ENCODE measurements at regions of chr4 and their contacts with region 1.

Region 1: DNA sequence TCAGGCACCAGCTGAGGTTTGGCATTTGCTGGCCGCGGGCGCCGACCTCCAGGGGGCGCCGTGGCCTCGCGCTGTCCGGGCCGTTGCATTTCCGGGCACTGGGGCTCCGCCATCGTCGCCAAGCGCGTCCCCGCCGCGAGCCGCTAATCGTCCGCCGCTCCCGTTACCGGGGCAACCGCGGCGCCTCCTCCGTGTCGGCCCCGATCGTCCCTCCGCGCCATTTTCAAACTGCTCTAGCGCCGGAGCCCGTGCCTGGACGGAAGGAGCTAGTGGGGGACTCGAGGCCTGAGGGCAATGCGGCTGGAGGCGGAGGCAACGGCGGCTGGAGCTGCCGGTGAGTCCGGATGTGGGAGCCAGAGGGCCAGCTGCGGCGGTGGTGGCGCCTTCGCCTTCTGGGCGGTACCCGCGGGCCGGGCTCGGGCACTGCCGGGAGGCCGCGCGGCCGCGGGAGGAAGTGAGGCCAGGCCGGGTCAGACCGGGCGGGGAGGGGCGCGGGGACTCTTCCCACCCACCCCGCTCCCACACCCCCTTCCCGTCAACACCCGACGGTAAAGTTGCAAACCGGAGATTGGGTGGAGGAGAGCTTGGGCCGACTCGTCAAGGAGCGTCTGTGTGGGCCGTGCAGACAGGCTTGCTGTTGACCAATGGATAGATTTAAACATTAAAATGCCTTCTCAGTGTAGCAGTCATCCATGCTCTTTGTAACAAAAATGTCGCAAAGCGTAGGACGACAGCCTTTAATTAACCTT is at the start of gene CEP135:
- DNase-seq: peak; percentile 94
- H3K4me3 Mint-ChIP-seq: peak within 1 kb of the TSS; percentile 91
- H3K27ac Mint-ChIP-seq: peak within 1 kb of the TSS; percentile 94
- H3K4me1 Mint-ChIP-seq: peaks cover 35% of the 10 kb centered on the region
- H3K27me3 Mint-ChIP-seq: no peaks in the 10 kb centered on the region
- total RNA-seq, gene CEP135: 18.6 to 19.4 TPM

Region 2: DNA sequence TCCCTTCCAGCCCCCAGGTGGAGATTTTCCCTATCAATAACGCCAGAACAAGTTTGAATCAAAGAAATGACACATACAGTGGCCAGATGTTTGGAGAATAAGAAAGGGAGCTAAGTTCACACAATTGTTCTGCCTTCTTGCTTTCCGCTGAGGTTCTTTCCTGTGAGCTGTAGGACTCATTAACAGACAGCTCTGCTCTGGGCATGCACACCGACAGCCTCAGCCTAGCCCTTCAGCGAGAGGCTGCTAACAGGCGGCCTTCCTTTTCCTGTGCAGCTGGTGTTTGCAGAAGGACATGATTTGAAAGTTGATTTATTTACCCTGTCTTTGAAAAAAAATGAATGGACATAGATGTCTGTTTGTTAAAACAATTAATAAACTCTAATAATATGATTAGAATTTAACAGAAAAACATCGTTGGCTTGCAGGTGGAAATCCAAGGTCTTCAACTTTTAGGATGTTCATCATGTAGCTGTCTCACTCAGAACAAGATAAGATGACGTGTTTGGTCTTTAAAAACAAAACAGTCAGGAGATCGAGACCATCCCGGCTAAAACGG is 1006.8 kb before region 1 on chr4:
- CTCF ChIA-PET with region 1: no interaction called
- intact Hi-C with region 1: loop called (anchors 2 kb)
- DNase-seq: peak; percentile 65
- H3K4me3 Mint-ChIP-seq: peak overlapping the region; percentile 42
- H3K27ac Mint-ChIP-seq: peak overlapping the region; percentile 69
- H3K4me1 Mint-ChIP-seq: peaks cover 55% of the 10 kb centered on the region
- H3K27me3 Mint-ChIP-seq: no peaks in the 10 kb centered on the region

Region 3: DNA sequence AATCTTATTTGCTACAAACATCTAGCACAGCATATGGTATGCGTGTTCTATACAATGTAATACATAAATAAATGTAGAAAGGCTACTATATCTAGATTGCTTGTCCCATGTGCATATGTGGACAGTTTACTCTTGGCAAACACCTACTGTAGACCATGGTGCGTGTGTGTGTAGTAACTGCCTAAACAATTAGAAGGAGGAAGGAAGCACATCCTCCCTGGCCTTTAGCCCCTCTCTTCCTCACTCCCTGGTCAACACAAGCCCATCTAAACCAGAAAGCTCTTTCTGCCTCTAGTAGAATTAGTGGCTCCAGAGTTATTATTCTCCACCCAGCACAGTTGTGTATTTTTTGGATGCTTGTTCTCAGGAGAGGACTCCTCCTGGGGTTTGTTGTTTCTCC is 897.4 kb before region 1 on chr4:
- CTCF ChIA-PET with region 1: no interaction called
- intact Hi-C with region 1: no loop called
- DNase-seq: no peak
- H3K4me3 Mint-ChIP-seq: no peak overlapping the region
- H3K27ac Mint-ChIP-seq: no peak overlapping the region
- H3K4me1 Mint-ChIP-seq: no peaks in the 10 kb centered on the region
- H3K27me3 Mint-ChIP-seq: peaks cover 8% of the 10 kb centered on the region

Region 4: DNA sequence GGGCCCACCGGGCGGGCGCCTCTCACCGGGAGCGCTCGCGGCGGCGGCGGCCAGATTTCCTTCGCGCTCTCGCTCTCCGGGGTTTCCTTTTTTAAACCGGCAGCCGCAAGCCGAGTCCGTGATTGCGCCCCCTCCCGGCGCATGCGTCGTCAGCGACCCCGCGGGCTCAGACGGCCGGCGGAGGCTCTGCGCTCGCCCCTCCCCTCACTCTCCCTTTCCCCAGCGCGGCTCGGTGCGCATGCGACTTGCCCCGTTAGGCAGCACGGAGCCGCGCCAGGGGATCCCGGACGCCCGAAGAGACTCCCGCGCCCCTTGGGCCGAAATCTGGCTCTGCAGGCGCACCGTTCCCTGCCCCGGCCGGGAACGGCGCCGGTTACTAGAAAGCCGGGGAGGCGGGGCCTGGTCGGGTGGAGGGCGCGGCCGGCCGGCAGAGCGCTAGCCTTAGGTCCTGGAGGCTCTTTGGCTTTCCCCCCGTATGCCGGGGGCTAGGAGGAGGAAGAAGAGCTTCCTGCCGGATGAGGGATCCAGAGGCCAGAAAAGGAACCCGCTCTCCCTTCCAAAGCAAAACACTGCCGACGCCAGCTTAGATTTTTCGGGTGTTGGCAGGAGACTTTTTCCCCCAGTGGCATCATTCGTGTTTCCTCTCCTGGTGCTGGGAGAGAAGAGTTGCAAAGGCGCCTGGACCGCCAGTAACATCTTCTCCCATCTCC is 402.0 kb before region 1 on chr4 and contains the start of gene CLOCK:
- CTCF ChIA-PET with region 1: no interaction called
- intact Hi-C with region 1: loop called (anchors 1 kb)
- DNase-seq: peak; percentile 83
- H3K4me3 Mint-ChIP-seq: peak within 1 kb of the TSS; percentile 84
- H3K27ac Mint-ChIP-seq: peak within 1 kb of the TSS; percentile 89
- H3K4me1 Mint-ChIP-seq: peaks cover 50% of the 10 kb centered on the region
- H3K27me3 Mint-ChIP-seq: no peaks in the 10 kb centered on the region
- total RNA-seq, gene CLOCK: 8.1 to 8.5 TPM

Region 5: DNA sequence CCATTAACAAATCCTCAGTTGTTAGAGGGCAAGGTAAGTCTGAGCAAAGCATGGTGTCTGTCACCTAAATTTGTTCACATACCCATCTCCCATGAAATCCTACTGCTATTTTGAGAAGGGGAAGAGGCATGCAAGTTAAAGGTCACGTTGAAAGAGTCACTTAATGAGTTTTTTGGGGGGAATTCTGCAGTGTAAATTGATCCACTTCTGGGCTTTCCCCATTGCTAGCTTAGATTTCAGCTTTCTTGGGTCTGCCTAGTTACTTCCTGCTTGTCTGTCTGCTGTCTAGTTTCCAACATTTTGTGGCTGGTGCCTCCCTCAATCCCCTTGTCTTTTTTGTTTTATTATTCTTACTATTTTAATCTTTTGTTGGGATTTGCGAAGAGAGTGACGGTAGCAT is 31.8 kb after region 1 on chr4:
- CTCF ChIA-PET with region 1: interaction called, 4 read pairs
- intact Hi-C with region 1: loop called (anchors 2 kb)
- DNase-seq: peak; percentile 6
- H3K4me3 Mint-ChIP-seq: no peak overlapping the region
- H3K27ac Mint-ChIP-seq: peak overlapping the region; percentile 65
- H3K4me1 Mint-ChIP-seq: peaks cover 8% of the 10 kb centered on the region
- H3K27me3 Mint-ChIP-seq: no peaks in the 10 kb centered on the region

Region 6: GRCh38 chr4:56123051-56123450 is 174.2 kb after region 1 on chr4:
- CTCF ChIA-PET with region 1: no interaction called
- intact Hi-C with region 1: no loop called
- DNase-seq: no peak
- H3K4me3 Mint-ChIP-seq: no peak overlapping the region
- H3K27ac Mint-ChIP-seq: no peak overlapping the region
- H3K4me1 Mint-ChIP-seq: no peaks in the 10 kb centered on the region
- H3K27me3 Mint-ChIP-seq: no peaks in the 10 kb centered on the region

Region 7: GRCh38 chr4:56301181-56302076 is 352.5 kb after region 1 on chr4:
- CTCF ChIA-PET with region 1: interaction called, 16 read pairs
- intact Hi-C with region 1: loop called (anchors 1 kb)
- DNase-seq: peak; percentile 84
- H3K4me3 Mint-ChIP-seq: peak overlapping the region; percentile 45
- H3K27ac Mint-ChIP-seq: no peak overlapping the region
- H3K4me1 Mint-ChIP-seq: peaks cover 12% of the 10 kb centered on the region
- H3K27me3 Mint-ChIP-seq: no peaks in the 10 kb centered on the region

Region 8: DNA sequence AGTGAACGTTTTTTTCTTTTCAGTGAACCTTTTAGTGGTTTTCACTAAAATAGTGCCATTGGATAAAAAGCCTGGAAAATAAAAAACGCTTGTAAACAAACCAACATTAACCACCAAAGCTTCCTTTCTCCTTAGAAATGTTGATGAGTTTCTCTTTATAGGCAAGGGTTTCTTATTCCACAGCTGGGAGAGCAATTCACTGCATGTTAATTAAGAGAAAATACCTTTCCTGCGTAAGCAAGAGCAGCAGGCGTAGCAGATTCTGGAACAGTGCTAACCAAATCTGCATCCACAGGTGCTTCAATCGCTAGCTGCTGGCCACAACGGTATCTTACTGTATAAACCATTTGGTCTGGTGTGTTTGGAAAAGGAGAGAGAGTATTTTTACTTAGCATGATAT is 451.7 kb after region 1 on chr4:
- CTCF ChIA-PET with region 1: no interaction called
- intact Hi-C with region 1: no loop called
- DNase-seq: no peak
- H3K4me3 Mint-ChIP-seq: no peak overlapping the region
- H3K27ac Mint-ChIP-seq: no peak overlapping the region
- H3K4me1 Mint-ChIP-seq: no peaks in the 10 kb centered on the region
- H3K27me3 Mint-ChIP-seq: no peaks in the 10 kb centered on the region

Region 9: DNA sequence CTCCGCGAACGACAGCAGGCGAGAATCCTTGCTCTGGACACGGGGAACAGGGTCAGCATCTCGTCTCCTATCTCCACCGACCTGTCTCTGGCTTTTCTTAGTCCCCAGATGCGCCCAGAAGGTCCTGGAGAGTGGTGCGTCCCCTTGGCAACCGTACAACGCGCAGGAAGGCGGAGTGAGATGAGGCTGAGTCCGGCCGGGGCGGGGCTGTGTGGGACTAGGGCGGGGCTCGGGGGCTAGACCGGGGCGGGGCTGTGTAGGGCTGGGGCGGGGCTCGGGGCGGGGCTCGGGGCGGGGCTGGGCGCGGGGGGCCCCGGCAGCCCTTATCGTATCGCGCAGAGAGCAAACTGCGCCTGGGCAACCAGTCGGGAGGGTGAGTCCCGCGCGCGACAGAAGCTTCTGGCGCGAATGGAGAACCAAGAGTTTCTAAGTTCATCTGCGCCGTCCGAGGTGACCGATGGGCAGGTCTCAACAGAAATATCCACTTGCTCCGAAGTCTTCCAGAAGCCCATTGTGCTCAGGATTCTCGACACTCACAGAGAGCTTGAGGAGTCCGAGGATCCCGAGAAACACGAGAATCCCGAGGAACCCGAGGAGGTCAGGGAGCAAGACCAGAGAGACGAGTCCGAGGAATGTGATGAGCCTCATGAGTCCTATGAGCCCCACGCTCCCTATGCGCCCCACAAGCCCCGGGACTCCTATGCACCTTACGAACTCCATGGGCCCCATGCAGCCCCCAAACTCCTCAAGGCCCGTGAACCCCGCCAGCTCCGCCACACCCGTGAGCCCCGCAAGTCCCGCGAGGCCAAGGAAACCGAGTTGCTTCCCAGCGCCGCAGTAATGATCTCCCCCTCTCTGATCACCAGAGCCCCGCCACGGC is 581.6 kb after region 1 on chr4:
- CTCF ChIA-PET with region 1: no interaction called
- intact Hi-C with region 1: loop called (anchors 1 kb)
- DNase-seq: peak; percentile 88
- H3K4me3 Mint-ChIP-seq: peak overlapping the region; percentile 58
- H3K27ac Mint-ChIP-seq: no peak overlapping the region
- H3K4me1 Mint-ChIP-seq: peaks cover 1% of the 10 kb centered on the region
- H3K27me3 Mint-ChIP-seq: peaks cover 4% of the 10 kb centered on the region

Region 10: DNA sequence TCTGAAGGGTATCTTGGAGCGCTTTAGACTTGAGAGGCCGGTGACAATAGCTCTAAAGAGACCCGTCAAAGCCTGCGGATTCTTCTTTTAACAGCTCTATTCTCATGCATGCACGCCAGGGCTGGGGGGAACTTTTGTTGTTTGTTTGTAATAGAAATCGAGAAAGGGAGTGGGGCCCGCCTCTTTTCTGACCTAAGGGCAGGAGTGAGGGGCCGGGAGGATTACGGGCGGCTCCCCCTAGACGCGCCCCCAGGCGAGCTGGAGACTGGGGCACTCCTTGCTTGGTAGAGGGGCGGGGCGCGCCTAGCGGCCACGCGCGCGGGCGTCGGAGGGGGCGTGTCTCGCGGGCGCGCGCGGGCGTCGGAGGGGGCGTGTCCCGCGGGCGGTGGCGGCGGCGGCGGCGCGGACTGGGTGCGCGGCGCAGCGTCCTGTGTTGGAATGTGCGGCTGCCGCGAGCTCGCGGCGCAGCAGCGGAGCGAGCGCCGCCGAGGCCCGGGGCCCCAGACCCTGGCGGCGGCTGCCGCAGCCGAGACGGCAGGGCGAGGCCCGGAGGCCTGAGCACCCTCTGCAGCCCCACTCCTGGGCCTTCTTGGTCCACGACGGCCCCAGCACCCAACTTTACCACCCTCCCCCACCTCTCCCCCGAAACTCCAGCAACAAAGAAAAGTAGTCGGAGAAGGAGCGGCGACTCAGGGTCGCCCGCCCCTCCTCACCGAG is 958.7 kb after region 1 on chr4 and contains the start of gene REST:
- CTCF ChIA-PET with region 1: no interaction called
- intact Hi-C with region 1: loop called (anchors 2 kb)
- DNase-seq: peak; percentile 64
- H3K4me3 Mint-ChIP-seq: peak within 1 kb of the TSS; percentile 81
- H3K27ac Mint-ChIP-seq: peak within 1 kb of the TSS; percentile 65
- H3K4me1 Mint-ChIP-seq: peaks cover 43% of the 10 kb centered on the region
- H3K27me3 Mint-ChIP-seq: no peaks in the 10 kb centered on the region
- total RNA-seq, gene REST: 35.6 to 36.8 TPM

Measured in activated naive CD4-positive, alpha-beta T cell treated with anti-CD3 and anti-CD28 coated beads for 36 hours (primary cell).